Ascending aorta (tissue), 2 donors: ENCODE measurements at regions of chrX and their contacts with region 1.

Region 1: DNA sequence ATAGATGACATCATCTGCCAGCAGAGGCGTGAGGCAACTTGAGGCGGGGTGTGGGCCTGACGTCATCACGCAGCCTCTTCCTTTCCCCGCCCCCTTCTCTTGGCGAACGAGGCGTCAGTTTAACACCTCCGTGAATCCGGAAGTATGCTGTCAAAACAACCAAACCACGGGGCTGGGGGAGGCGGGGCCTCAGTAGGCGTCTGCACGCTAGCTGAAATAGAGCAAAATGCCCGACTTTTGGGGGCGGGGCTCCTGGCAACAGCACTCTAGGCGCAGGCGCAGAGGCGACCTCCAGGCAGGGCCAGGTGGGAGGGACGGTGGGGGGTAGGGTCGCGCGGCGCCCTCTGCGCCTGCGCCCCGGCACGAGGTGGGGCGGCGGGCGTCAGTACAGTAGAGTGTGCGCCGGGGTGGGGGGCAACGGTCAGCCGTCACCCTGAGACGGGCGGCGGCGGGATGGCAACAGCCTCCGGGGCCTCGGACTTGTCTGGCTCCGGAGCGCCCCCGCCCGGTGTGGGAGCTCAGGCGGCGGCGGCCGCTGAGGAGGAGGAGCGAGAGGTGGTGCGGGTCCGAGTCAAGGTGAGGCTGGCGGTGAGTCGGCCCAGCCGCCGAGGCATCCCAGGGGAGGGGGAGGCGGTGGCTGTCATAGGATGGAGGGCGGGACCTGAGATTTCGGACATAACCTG is at the start of gene TBC1D25:
- DNase-seq: peak; percentile 93 to 98
- H3K4me3 ChIP-seq: peak within 1 kb of the TSS; percentile 53 to 78
- H3K27ac ChIP-seq: peak within 1 kb of the TSS; percentile 79 to 87
- H3K4me1 ChIP-seq: no peaks in the 10 kb centered on the region
- H3K27me3 ChIP-seq: no peaks in the 10 kb centered on the region
- CTCF ChIP-seq: peak; percentile 20 to 55 (median 43)
- total RNA-seq, gene TBC1D25: 8.2 TPM

Region 2: GRCh38 chrX:48508400-48509244 is 30.9 kb before region 1 on chrX and contains the start of gene PORCN:
- intact Hi-C with region 1: loop called (anchors 1 kb)
- DNase-seq: peak; percentile 28 to 86
- H3K4me3 ChIP-seq: peak within 1 kb of the TSS; percentile 63 to 69
- H3K27ac ChIP-seq: peak within 1 kb of the TSS; percentile 51 to 72
- H3K4me1 ChIP-seq: peaks cover 0 to 3% of the 10 kb centered on the region in 2 donors
- H3K27me3 ChIP-seq: no peaks in the 10 kb centered on the region
- CTCF ChIP-seq: no peak
- total RNA-seq, gene PORCN: 6.2 TPM

Region 3: GRCh38 chrX:48521353-48522243 is 17.9 kb before region 1 on chrX and contains the start of gene EBP:
- intact Hi-C with region 1: loop called (anchors 1 kb)
- DNase-seq: peak; percentile 69 to 93
- H3K4me3 ChIP-seq: peak within 1 kb of the TSS; percentile 56 to 79
- H3K27ac ChIP-seq: peak within 1 kb of the TSS; percentile 59 to 69
- H3K4me1 ChIP-seq: no peaks in the 10 kb centered on the region
- H3K27me3 ChIP-seq: no peaks in the 10 kb centered on the region
- CTCF ChIP-seq: no peak
- total RNA-seq, gene EBP: 76.2 TPM

Region 4: GRCh38 chrX:48574270-48575266 is 35.1 kb after region 1 on chrX and contains the start of gene RBM3:
- intact Hi-C with region 1: loop called (anchors 1 kb)
- DNase-seq: peak; percentile 77 to 95
- H3K4me3 ChIP-seq: peak within 1 kb of the TSS; percentile 71 to 78
- H3K27ac ChIP-seq: peak within 1 kb of the TSS; percentile 96 to 99
- H3K4me1 ChIP-seq: peaks cover 0 to 7% of the 10 kb centered on the region in 2 donors
- H3K27me3 ChIP-seq: no peaks in the 10 kb centered on the region
- CTCF ChIP-seq: peak in 2 of 3 experiments; percentile 30 to 36
- total RNA-seq, gene RBM3: 119 TPM

Region 5: GRCh38 chrX:48597353-48598264 is 58.1 kb after region 1 on chrX and contains the start of gene WDR13:
- intact Hi-C with region 1: loop called (anchors 2 kb)
- DNase-seq: peak; percentile 71 to 95
- H3K4me3 ChIP-seq: peak within 1 kb of the TSS; percentile 59 to 68
- H3K27ac ChIP-seq: peak within 1 kb of the TSS; percentile 94
- H3K4me1 ChIP-seq: no peaks in the 10 kb centered on the region
- H3K27me3 ChIP-seq: no peaks in the 10 kb centered on the region
- CTCF ChIP-seq: no peak
- total RNA-seq, gene WDR13: 87.1 TPM